Activated T-helper 1 cell treated with anti-CD3 and anti-CD28 coated beads, Interleukin-12 subunit alpha, Interleukin-12 subunit beta, Interleukin-2, Interleukin-4 antibody, amounts not matched to agents 30 ng/mL and 10 ng/mL and 1 ng/mL, durations not matched to agents 14 hours and 24 hours and 36 hours (primary cell): ENCODE measurements at regions of chr1 and their contacts with region 1.

Region 1: DNA sequence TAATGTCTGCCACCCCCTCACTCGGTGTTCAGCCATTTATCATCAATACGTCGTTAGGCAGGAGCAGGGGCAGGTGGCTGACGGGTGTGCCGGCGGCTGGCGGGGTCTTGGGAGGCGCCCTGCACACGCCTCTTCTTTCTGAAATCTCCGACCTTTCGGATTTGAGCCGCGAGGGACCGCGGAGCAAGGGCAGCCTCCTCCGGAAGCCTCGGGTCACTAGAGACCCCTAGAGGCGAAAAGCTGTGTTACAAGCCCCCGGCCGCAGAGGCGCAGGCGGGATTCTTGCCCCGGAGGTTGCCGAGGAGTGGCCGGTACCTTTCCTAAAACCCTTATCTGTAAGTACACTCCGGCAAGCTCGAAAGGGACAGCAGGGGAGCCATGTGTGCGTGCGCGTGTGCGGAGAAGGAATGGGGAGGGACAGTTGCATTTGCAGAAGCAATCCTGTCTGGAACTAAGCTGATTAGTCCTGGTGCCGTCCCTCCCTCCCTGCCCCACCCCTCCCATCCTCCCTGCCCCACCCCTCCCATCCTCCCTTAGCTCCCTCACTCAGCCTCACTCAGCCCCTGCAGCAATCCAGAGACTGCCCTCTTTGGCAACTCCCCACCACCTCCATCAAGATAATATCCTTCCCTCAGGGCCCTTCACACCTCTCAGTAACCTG is 11.0 kb downstream of the BRINP2 start:
- DNase-seq: peak; percentile 22
- H3K4me3 Mint-ChIP-seq: peak overlapping the region; percentile 26
- H3K27ac Mint-ChIP-seq: no peak overlapping the region
- H3K4me1 Mint-ChIP-seq: peaks cover 11% of the 10 kb centered on the region
- H3K27me3 Mint-ChIP-seq: peaks cover 23% of the 10 kb centered on the region

Region 2: GRCh38 chr1:176897350-176898236 is 284.2 kb before region 1 on chr1:
- intact Hi-C with region 1: loop called (anchors 1 kb)
- DNase-seq: peak; percentile 2
- H3K4me3 Mint-ChIP-seq: no peak overlapping the region
- H3K27ac Mint-ChIP-seq: no peak overlapping the region
- H3K4me1 Mint-ChIP-seq: peaks cover 8% of the 10 kb centered on the region
- H3K27me3 Mint-ChIP-seq: no peaks in the 10 kb centered on the region